Aorta (tissue), 5 donors: ENCODE measurements at regions of chr4 and their contacts with region 1.

Region 1: GRCh38 chr4:55554453-55555030 is 7.8 kb upstream of the CLOCK start:
- DNase-seq: no peak
- ATAC-seq: no peak
- H3K4me3 ChIP-seq: no peak overlapping the region
- H3K27ac ChIP-seq: no peak overlapping the region
- H3K4me1 ChIP-seq: no peaks in the 10 kb centered on the region
- H3K27me3 ChIP-seq: no peaks in the 10 kb centered on the region

Region 2: DNA sequence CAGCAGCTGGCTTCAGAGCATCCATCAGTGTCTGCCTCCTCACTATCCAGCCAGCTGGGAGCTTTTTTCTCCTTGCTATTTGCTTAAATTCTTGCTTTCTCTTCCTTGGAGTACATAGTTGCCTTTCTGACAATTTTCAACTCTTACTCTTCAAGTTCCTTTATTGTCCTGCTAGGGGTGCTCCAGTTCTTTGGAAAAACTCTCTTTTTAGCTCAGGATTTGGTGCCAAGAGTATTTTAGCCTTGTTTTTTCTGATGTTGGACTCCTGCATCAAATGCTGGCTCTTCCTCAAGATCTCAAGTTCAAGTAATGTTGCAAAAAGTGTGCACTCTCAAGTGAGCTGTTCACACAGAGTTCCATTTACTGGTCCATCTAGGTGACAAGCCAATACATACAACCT is 555.5 kb before region 1 on chr4:
- intact Hi-C with region 1: loop called in 1 of 2 experiments (anchors 10 kb)
- DNase-seq: no peak
- ATAC-seq: peak; percentile 72
- H3K4me3 ChIP-seq: no peak overlapping the region
- H3K27ac ChIP-seq: no peak overlapping the region
- H3K4me1 ChIP-seq: no peaks in the 10 kb centered on the region
- H3K27me3 ChIP-seq: no peaks in the 10 kb centered on the region

Region 3: DNA sequence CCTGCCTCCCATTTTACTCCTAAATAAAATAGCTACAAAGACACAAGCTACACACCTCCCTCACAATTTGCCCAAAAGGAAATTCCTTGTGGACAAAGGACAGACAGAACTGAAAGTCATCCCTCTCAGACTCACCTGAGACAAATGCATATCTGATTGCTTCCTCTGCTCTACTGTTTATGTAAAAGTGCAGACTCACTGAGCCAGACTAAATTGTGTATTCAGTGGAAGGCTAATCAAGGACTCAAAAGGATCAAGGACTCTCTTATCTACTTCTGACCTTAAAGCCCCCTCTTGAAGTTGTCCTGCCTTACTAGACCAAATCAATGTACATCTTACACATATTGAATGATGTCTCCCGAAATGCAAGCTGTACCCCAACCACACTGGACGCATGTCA is 33.6 kb after region 1 on chr4:
- intact Hi-C with region 1: no loop called
- DNase-seq: no peak
- ATAC-seq: no peak
- H3K4me3 ChIP-seq: no peak overlapping the region
- H3K27ac ChIP-seq: no peak overlapping the region
- H3K4me1 ChIP-seq: no peaks in the 10 kb centered on the region
- H3K27me3 ChIP-seq: no peaks in the 10 kb centered on the region